Thyroid gland (tissue), 4 donors: ENCODE measurements at regions of chr5 and their contacts with region 1.

Region 1: DNA sequence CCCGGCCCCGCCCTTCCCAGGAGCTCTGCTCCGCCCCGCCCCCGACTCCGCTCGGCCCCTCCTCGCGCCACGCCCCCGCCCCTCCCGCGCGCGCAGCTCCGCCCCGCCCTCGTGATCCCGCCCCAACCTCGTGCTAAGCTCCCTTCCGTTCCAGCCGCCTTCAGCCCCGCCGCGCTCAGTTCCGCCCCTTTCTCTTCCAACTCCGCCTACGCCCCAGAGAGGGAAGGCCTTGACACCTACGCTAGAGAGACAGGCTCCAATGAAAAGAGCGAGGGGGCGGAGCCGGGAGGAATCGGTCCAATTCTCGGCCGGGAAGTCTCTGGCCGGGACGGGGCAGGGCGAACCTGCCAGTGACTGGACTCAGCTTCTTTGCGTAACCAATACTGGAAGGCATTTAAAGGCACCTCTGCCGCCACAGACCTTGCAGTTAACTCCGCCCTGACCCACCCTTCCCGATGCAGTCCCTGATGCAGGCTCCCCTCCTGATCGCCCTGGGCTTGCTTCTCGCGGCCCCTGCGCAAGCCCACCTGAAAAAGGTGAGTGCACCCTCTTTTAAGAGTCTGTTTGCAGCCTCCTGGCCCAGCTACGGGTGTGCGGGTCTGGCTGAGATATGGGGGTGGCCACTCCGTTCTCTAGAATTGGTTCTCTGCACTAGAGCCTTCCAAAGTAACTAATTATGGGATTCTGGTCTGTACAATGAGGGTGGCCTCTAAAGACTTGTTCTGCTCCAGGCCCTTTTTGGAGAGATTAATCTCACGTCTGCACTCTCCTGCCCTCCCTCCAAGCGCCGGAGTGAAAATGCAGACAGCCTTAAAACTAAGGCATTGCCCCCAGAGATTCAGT is at the start of gene GM2A:
- DNase-seq: peak; percentile 100
- H3K4me3 ChIP-seq: peak within 1 kb of the TSS; percentile 60 to 74 (median 72)
- H3K27ac ChIP-seq: peak within 1 kb of the TSS; percentile 49 to 72 (median 62)
- H3K4me1 ChIP-seq: peaks cover 9 to 17% of the 10 kb centered on the region in 2 donors
- H3K27me3 ChIP-seq: no peaks in the 10 kb centered on the region
- CTCF ChIP-seq: no peak
- POLR2A ChIP-seq: peak in 1 of 2 donors; percentile 89
- total RNA-seq, gene GM2A: 15.4 to 23.8 (median 18.8) TPM

Region 2: GRCh38 chr5:151063142-151063949 is 189.6 kb before region 1 on chr5:
- intact Hi-C with region 1: loop called (anchors 5 kb)
- DNase-seq: no peak
- H3K4me3 ChIP-seq: no peak overlapping the region
- H3K27ac ChIP-seq: peak overlapping the region; percentile 47 to 78 (median 67)
- H3K4me1 ChIP-seq: peaks cover 50 to 82% of the 10 kb centered on the region in 2 donors
- H3K27me3 ChIP-seq: no peaks in the 10 kb centered on the region
- CTCF ChIP-seq: no peak
- POLR2A ChIP-seq: no peak